Ascending aorta (tissue), 2 donors: ENCODE measurements at regions of chr13 and their contacts with region 1.

Region 1: DNA sequence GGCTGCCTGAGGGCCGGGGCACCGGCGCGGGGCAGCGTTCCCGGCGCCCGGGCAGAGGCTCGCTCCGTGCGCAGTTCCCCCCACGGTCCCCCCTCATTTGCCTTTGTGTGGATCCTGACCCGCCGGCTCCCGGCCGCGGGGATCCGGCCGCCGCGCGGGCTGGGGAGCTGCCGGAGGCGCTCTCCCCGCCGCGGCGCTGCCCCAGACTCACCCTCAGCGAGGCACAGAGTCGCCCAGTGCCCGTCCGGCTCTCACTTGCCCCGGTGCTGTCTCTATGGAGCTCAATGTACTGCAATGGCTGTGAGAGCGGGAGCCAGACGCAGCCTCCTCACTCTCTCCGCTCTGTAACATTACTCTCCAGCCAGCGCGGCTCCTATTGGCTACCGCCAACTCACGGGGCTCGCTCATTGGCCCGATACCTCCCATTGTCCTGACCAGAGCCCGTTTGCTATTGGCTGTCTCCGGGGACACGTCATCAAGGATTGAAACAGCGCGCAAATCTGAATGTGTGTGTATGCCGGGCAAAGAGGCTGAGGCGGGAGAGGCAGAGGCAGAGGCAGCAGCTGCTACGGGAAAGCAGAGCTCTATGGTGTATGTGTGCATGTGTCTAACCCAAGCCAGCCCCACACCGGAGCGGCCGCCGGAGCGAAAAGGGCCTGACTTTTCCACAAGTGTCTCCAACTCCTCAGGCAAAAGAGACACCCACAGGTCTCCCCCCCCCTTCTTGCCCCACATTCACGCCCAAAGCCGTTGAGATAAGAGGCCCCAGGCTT is at the start of gene HMGB1:
- DNase-seq: peak; percentile 96 to 99
- H3K4me3 ChIP-seq: peak within 1 kb of the TSS; percentile 98 to 100
- H3K27ac ChIP-seq: peak within 1 kb of the TSS; percentile 98 to 100
- H3K4me1 ChIP-seq: peaks cover 4 to 24% of the 10 kb centered on the region in 2 donors
- H3K27me3 ChIP-seq: no peaks in the 10 kb centered on the region
- CTCF ChIP-seq: no peak
- total RNA-seq, gene HMGB1: 135 TPM

Region 2: GRCh38 chr13:29923554-29924481 is 542.0 kb before region 1 on chr13:
- intact Hi-C with region 1: loop called (anchors 10 kb)
- DNase-seq: peak; percentile 81 to 96
- H3K4me3 ChIP-seq: no peak overlapping the region
- H3K27ac ChIP-seq: peak overlapping the region; percentile 85 to 93
- H3K4me1 ChIP-seq: peaks cover 15 to 36% of the 10 kb centered on the region in 2 donors
- H3K27me3 ChIP-seq: no peaks in the 10 kb centered on the region
- CTCF ChIP-seq: peak; percentile 80 to 92 (median 91)

Region 3: GRCh38 chr13:30341815-30342570 is 123.8 kb before region 1 on chr13:
- intact Hi-C with region 1: loop called (anchors 5 kb)
- DNase-seq: peak; percentile 45 to 94
- H3K4me3 ChIP-seq: peak overlapping the region in 1 of 2 donors; percentile 15
- H3K27ac ChIP-seq: peak overlapping the region; percentile 77 to 83
- H3K4me1 ChIP-seq: peaks cover 4 to 20% of the 10 kb centered on the region in 2 donors
- H3K27me3 ChIP-seq: no peaks in the 10 kb centered on the region
- CTCF ChIP-seq: no peak

Region 4: DNA sequence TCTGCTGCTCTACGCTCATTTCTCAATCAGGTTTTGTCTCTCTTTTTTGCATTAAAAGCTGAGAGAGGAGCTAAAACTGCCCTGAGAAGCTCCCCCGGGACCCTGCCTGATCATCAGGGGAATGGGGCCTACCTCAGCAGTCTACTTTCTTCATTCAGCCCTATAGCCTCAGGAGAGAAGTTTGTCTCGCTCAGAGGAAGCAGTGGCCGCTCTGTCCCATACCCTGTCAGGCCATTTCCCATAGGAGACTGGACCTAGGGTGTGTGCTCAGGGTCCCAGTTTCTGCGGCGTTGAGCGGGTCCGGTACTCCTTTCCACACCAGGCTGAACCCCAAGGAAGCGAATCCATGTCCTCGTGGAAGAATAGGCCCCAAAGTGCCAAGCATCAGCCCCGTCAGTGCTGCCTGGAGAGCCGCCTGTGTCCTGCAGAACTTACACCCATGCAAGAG is 21.8 kb before region 1 on chr13:
- intact Hi-C with region 1: loop called (anchors 2 kb)
- DNase-seq: no peak
- H3K4me3 ChIP-seq: no peak overlapping the region
- H3K27ac ChIP-seq: no peak overlapping the region
- H3K4me1 ChIP-seq: no peaks in the 10 kb centered on the region
- H3K27me3 ChIP-seq: no peaks in the 10 kb centered on the region
- CTCF ChIP-seq: no peak

Region 5: DNA sequence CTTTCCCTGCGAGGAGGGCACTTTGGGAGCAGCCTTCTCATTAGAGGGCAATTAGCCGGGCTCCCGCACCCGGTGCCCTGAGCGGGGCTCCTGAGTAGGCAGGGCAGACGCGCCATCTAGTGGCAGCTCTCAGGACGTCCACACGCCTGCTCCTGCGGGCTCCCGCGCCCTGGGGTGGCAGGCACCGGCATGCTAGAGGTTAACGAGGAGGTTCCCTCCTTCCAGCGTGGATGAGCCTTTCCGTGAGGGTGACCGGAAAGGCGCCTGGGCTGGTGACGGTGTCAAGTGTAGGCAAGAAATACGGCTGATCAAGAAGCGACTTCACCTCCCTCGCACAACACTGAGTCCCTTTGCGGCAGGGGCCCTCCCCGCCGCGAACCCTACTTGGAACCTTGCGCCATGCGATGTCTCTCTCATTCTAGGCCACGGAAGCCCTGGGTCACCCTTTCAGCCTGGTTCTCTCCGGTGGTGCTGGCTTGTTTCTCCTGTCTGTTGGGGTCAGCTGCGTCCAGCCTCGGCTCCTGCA is 337.2 kb after region 1 on chr13:
- intact Hi-C with region 1: loop called (anchors 5 kb)
- DNase-seq: peak; percentile 47 to 95
- H3K4me3 ChIP-seq: peak overlapping the region; percentile 43 to 54
- H3K27ac ChIP-seq: peak overlapping the region in 1 of 2 donors; percentile 60
- H3K4me1 ChIP-seq: peaks cover 0 to 13% of the 10 kb centered on the region in 2 donors
- H3K27me3 ChIP-seq: no peaks in the 10 kb centered on the region
- CTCF ChIP-seq: peak; percentile 89 to 97 (median 91)

Region 6: GRCh38 chr13:30905932-30906383 is 440.2 kb after region 1 on chr13 and contains the start of gene MEDAG:
- intact Hi-C with region 1: loop called (anchors 10 kb)
- DNase-seq: peak; percentile 76 to 96
- H3K4me3 ChIP-seq: peak within 1 kb of the TSS; percentile 56 to 81
- H3K27ac ChIP-seq: peak within 1 kb of the TSS; percentile 95 to 98
- H3K4me1 ChIP-seq: peaks cover 0 to 21% of the 10 kb centered on the region in 2 donors
- H3K27me3 ChIP-seq: no peaks in the 10 kb centered on the region
- CTCF ChIP-seq: no peak
- total RNA-seq, gene MEDAG: 98.8 TPM